ENCODE measurements at regions of chr15 and their contacts with region 1.

Region 1: GRCh38 chr15:35444557-35445204 is 101.3 kb downstream of the DPH6 start:
- DNase-seq: no peak
- H3K4me3 Mint-ChIP-seq: no peak overlapping the region
- H3K27ac Mint-ChIP-seq: no peak overlapping the region
- H3K4me1 Mint-ChIP-seq: no peaks in the 10 kb centered on the region
- H3K27me3 Mint-ChIP-seq: no peaks in the 10 kb centered on the region

Region 2: GRCh38 chr15:35078221-35078915 is 366.3 kb before region 1 on chr15:
- CTCF ChIA-PET with region 1: interaction called, 48 read pairs
- POLR2A ChIA-PET with region 1: no interaction called
- intact Hi-C with region 1: loop called (anchors 1 kb)
- DNase-seq: peak; percentile 39
- H3K4me3 Mint-ChIP-seq: no peak overlapping the region
- H3K27ac Mint-ChIP-seq: no peak overlapping the region
- H3K4me1 Mint-ChIP-seq: no peaks in the 10 kb centered on the region
- H3K27me3 Mint-ChIP-seq: peaks cover 1% of the 10 kb centered on the region

Region 3: GRCh38 chr15:35410774-35411173 is 33.9 kb before region 1 on chr15:
- CTCF ChIA-PET with region 1: interaction called, 10 read pairs
- POLR2A ChIA-PET with region 1: no interaction called
- intact Hi-C with region 1: no loop called
- DNase-seq: no peak
- H3K4me3 Mint-ChIP-seq: no peak overlapping the region
- H3K27ac Mint-ChIP-seq: no peak overlapping the region
- H3K4me1 Mint-ChIP-seq: no peaks in the 10 kb centered on the region
- H3K27me3 Mint-ChIP-seq: no peaks in the 10 kb centered on the region

Region 4: DNA sequence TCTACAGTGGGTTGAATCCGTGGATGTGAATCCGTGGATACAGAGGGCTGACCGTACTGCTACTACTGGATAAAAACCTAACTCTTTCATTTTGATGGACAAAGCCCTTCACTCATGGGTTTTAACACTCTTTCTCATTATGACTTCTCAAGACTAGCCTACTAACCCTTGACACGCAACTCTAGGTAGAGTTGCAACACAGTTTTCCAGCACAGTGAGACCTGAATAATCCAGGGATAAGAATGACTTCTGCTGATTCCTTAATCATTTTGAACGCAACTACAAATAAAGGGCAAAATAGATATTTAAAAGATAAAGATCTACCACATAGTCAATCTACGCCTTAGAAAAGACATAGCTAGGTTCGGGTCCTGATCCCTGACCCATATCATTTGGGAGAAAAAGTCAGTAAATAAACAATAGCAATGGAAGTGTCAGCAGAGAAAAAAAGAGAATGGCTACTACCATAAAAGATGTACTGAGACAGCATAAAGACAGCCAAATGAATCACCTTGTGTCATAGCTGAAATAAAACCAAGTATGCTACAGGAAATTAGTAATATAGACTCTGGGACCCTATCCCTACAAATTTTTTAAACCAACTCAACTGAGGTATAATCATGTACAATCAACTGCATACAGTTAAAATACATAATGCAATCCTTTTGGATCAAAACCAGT is 13.6 kb after region 1 on chr15:
- CTCF ChIA-PET with region 1: interaction called, 28 read pairs
- POLR2A ChIA-PET with region 1: no interaction called
- intact Hi-C with region 1: no loop called
- DNase-seq: no peak
- H3K4me3 Mint-ChIP-seq: no peak overlapping the region
- H3K27ac Mint-ChIP-seq: no peak overlapping the region
- H3K4me1 Mint-ChIP-seq: no peaks in the 10 kb centered on the region
- H3K27me3 Mint-ChIP-seq: no peaks in the 10 kb centered on the region